AG04450 (cell line): ENCODE measurements at regions of chr13 and their contacts with region 1.

Region 1: GRCh38 chr13:30114571-30115256 is 192.6 kb downstream of the KATNAL1 start:
- DNase-seq: no peak
- H3K4me3 ChIP-seq: peak overlapping the region; percentile 58
- H3K27ac ChIP-seq: no peak overlapping the region
- H3K27me3 ChIP-seq: peaks cover 5% of the 10 kb centered on the region
- CTCF ChIP-seq: peak; percentile 90

Region 2: GRCh38 chr13:29771247-29771646 is 343.5 kb before region 1 on chr13:
- CTCF ChIA-PET with region 1: interaction called, 213 read pairs
- POLR2A ChIA-PET with region 1: no interaction called
- DNase-seq: no peak
- H3K4me3 ChIP-seq: no peak overlapping the region
- H3K27ac ChIP-seq: no peak overlapping the region
- H3K27me3 ChIP-seq: no peaks in the 10 kb centered on the region
- CTCF ChIP-seq: peak; percentile 43

Region 3: DNA sequence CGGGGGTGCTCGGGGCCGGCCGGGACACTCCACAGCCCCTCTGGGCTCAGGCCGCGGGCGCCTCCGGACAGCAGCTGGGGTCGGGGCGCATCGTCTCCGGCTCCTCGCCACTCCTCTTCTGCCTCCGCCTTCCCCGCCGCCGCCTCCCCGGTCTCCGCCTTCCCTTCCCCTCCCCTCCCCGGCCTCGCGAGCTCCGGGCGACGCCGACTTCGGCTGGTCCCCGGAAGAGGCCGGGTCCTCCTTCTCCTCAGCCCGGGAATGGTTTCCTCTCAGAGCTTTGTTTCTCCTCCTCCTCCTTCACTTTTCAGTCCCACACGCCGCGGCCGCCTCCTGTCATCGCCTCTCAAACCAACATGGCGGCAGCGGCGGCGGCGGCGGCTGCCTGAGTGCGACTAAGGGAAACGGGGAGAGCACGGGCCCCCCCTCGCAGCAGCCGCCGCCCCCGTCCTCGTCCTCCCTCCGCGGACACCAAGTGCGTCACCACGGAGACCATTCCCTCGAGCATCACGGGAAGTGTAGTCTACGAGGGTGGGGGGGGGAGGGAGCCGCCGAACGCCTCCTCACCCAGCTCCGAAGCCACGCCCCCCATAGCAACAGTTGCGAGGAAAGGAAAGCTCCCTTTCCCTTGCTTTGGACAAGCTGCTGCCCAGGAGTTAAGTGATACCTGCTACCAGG is 264.4 kb before region 1 on chr13 and contains the start of gene UBL3:
- CTCF ChIA-PET with region 1: interaction called, 198 read pairs
- POLR2A ChIA-PET with region 1: interaction called, 8 read pairs
- DNase-seq: peak; percentile 87
- H3K4me3 ChIP-seq: peak within 1 kb of the TSS; percentile 70
- H3K27ac ChIP-seq: peak within 1 kb of the TSS; percentile 99
- H3K27me3 ChIP-seq: no peaks in the 10 kb centered on the region
- CTCF ChIP-seq: no peak
- polyA plus RNA-seq, gene UBL3: 16.8 and 24.7 TPM in 2 replicates

Region 4: DNA sequence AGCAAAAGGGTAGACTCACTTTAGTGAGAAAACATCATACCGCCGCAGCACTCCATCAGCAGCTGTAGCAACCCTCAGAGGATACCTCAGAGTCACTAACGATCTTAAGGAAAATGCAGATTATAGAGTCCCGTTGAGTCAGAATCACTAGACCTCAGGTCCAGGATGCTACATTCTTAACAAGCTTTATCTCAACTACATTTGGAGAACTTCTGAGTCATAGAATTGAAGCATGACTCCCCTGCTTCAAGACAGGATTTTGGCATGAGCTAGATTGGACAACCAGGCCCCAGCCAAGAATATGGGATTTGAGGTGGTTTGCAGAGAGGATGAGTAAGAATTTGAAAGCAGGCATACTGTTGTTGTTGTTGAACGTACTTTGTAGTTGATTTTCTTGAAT is 145.4 kb before region 1 on chr13:
- CTCF ChIA-PET with region 1: interaction called, 12 read pairs
- POLR2A ChIA-PET with region 1: no interaction called
- DNase-seq: peak; percentile 43
- H3K4me3 ChIP-seq: no peak overlapping the region
- H3K27ac ChIP-seq: no peak overlapping the region
- H3K27me3 ChIP-seq: no peaks in the 10 kb centered on the region
- CTCF ChIP-seq: no peak

Region 5: DNA sequence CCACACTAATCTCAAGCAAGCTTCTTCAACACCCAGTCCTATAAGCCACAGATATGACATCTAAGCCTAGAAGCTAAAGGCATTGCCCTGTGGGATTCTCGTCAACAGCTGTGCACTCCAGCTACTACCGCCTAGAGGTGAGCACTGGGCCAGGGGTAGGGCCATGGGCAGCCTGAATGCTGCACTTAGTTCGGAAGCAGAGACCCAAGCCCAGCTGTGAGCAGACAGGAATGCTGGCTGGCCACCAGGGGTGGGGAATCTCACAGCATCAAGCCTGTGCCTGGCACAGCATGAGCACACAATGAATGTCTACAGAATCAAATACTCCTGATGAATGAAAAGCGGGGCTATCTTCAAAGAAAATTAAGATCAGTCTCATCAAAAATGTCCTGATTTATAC is 96.8 kb before region 1 on chr13:
- CTCF ChIA-PET with region 1: no interaction called
- POLR2A ChIA-PET with region 1: no interaction called
- DNase-seq: no peak
- H3K4me3 ChIP-seq: no peak overlapping the region
- H3K27ac ChIP-seq: no peak overlapping the region
- H3K27me3 ChIP-seq: peaks cover 5% of the 10 kb centered on the region
- CTCF ChIP-seq: no peak

Region 6: DNA sequence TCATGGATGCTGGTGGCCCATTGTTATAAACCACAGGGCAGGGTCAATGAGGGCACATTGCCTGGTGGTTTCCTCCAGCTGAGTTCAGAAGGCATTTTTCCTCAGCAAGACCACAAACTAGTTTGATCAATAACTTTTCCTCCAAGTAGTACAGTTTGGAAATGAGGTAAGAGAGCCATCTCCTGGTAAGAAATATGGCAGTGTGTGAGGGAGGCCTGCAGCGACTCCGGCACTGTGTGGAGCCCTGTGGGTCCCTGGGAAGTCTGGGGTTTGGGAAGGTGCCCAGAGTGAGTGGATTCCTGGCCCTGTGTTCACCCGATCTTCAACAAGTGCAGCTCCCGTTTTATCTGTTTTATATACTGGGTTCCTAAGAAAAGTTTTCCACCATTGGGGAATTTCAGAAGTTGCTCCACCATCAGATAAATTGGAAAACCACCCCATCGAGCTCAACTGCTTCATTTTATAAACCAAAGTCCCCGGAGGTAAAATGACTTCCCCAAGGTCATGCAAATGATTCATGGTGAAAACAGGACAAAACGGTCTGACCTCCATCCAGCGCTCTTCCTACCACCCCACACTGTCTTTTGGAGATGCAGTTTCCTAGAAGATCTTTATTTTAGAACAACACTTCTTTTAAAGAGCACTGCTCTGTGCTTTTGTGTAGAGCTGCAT is 44.2 kb after region 1 on chr13:
- CTCF ChIA-PET with region 1: interaction called, 11 read pairs
- POLR2A ChIA-PET with region 1: no interaction called
- DNase-seq: peak; percentile 33
- H3K4me3 ChIP-seq: no peak overlapping the region
- H3K27ac ChIP-seq: peak overlapping the region; percentile 33
- H3K27me3 ChIP-seq: peaks cover 7% of the 10 kb centered on the region
- CTCF ChIP-seq: peak; percentile 64

Region 7: DNA sequence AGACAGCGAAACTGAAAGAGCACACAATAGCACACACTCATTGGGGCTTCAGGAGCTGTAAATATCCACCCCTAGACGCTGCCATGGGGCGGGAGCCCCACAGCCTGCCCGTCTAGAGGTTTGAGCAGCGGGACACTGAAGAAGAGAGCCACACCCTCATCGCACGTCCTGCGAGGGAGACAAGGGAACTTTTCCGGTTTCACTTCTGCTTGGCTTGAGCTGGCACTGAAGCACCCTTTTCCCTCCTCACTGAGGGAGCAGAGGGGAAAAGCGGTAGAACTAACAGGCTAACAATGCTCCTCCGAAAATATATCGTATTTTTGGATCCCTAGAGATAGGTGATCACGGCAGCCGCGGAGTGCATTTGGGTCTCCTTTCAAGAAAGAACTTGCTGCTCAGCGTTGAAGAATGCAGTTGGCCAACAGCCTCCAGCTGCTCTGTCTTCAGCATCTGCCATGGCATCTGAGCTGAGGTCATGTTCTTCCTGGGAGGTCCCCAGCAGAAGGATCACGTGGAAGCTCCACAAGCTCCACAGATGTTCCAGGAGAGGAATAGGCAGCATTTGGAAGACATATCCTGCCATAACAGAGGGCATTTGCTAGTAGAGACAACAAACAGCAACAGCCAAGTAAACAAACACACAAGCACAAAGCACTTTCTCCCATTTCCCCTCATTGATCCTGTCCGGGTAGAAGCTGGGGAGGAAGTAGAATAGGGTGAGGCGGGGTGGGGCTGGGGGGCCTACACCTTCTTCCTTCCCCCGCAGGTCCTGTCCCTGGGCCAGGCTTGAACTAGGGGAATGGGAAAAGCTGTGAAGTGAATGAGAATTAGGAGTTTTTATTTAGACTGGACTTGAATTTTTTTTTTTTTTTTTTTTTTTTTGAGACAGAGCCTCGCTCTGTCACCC is 575.8 kb after region 1 on chr13:
- CTCF ChIA-PET with region 1: no interaction called
- POLR2A ChIA-PET with region 1: no interaction called
- DNase-seq: peak; percentile 99
- H3K4me3 ChIP-seq: peak overlapping the region; percentile 64
- H3K27ac ChIP-seq: peak overlapping the region; percentile 96
- H3K27me3 ChIP-seq: no peaks in the 10 kb centered on the region
- CTCF ChIP-seq: no peak